ENCODE measurements at regions of chr3 and their contacts with region 1.

Region 1: DNA sequence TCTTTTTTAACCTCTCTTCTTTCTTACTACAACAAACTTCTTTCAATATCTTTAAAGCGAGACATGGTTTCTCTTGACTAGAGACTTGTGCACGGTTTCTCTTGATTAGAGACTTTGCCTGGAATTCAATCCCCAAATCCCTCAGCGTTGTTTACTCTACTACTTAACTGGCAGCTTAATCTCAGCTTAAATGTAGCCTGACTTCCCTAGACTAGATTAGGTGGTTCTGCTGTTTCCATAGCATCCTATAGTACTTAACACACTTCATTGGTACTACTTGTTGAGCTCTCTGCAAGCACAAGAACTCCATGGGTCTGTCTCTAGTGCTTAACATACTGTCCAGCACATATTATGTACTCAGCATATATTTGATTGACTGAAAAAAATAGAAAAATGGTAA is 168.2 kb upstream of the GPR149 start:
- DNase-seq: no peak
- H3K4me3 ChIP-seq: no peak overlapping the region
- CTCF ChIP-seq: no peak

Region 2: GRCh38 chr3:154364849-154365248 is 233.3 kb before region 1 on chr3:
- in situ Hi-C with region 1: loop called (anchors 10 kb)
- DNase-seq: no peak
- H3K4me3 ChIP-seq: no peak overlapping the region
- CTCF ChIP-seq: no peak

Region 3: GRCh38 chr3:154538566-154539360 is 59.4 kb before region 1 on chr3:
- in situ Hi-C with region 1: loop called (anchors 5 kb)
- DNase-seq: no peak
- H3K4me3 ChIP-seq: no peak overlapping the region
- CTCF ChIP-seq: no peak